ENCODE measurements at regions of chr5 and their contacts with region 1.

Region 1: GRCh38 chr5:98768160-98769005 is 5.1 kb upstream of the RGMB start:
- DNase-seq: no peak
- H3K4me3 ChIP-seq: peak overlapping the region; percentile 86
- CTCF ChIP-seq: peak; percentile 91

Region 2: DNA sequence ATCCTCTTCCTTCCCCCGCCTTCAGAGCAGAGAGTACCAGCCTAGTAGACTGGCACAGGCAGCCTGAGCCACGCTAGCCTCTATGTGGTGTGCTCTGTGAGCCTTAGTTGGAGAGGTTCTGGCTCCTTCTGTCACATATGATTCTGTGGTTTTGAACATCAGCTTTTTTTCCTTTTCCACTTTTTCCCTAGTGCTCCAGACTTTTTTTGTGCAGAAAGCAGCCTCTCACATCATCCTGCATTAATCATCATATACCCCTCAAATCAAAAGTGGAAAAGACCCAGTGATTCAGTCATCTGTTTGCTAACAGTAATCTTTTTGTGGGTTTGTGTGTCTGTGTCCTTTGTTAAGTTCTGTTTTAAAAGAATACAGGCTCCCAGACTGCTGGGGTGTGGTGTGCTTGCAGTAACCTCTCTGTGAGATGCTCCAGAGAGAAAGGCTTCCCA is 658.8 kb before region 1 on chr5:
- CTCF ChIA-PET with region 1: interaction called, 24 read pairs
- POLR2A ChIA-PET with region 1: interaction called, 21 read pairs
- DNase-seq: peak; percentile 49
- H3K4me3 ChIP-seq: peak overlapping the region; percentile 9
- CTCF ChIP-seq: no peak

Region 3: GRCh38 chr5:98354922-98355321 is 413.5 kb before region 1 on chr5:
- CTCF ChIA-PET with region 1: interaction called, 63 read pairs
- POLR2A ChIA-PET with region 1: interaction called, 4 read pairs
- DNase-seq: no peak
- H3K4me3 ChIP-seq: no peak overlapping the region
- CTCF ChIP-seq: no peak

Region 4: GRCh38 chr5:98397081-98397480 is 371.3 kb before region 1 on chr5:
- CTCF ChIA-PET with region 1: interaction called, 19 read pairs
- POLR2A ChIA-PET with region 1: interaction called, 5 read pairs
- DNase-seq: peak; percentile 85
- H3K4me3 ChIP-seq: no peak overlapping the region
- CTCF ChIP-seq: no peak

Region 5: DNA sequence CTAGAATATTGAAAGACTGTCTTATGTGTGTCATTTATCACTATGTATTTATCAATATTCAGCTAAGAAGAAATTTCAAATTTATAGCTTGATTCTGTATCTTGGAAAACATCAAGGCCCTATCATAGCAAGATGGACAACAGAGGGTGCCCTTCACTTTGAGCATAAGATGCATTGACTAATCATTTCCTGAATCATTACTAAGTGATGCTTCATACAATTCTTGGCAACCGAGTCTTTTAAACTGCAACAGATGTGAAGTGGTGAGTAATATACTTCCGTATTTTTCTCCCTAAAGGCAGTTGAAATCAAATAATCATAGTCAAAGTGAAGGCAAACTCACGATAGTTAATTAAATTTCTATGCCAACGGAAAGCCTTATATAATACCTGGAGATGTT is 313.5 kb before region 1 on chr5:
- CTCF ChIA-PET with region 1: interaction called, 68 read pairs
- POLR2A ChIA-PET with region 1: interaction called, 30 read pairs
- DNase-seq: peak; percentile 87
- H3K4me3 ChIP-seq: no peak overlapping the region; the same call in 1 of the 2 replicates
- CTCF ChIP-seq: peak; percentile 53

Region 6: GRCh38 chr5:98570010-98570409 is 198.4 kb before region 1 on chr5:
- CTCF ChIA-PET with region 1: interaction called, 11 read pairs
- POLR2A ChIA-PET with region 1: interaction called, 3 read pairs
- DNase-seq: no peak
- H3K4me3 ChIP-seq: no peak overlapping the region
- CTCF ChIP-seq: no peak

Region 7: DNA sequence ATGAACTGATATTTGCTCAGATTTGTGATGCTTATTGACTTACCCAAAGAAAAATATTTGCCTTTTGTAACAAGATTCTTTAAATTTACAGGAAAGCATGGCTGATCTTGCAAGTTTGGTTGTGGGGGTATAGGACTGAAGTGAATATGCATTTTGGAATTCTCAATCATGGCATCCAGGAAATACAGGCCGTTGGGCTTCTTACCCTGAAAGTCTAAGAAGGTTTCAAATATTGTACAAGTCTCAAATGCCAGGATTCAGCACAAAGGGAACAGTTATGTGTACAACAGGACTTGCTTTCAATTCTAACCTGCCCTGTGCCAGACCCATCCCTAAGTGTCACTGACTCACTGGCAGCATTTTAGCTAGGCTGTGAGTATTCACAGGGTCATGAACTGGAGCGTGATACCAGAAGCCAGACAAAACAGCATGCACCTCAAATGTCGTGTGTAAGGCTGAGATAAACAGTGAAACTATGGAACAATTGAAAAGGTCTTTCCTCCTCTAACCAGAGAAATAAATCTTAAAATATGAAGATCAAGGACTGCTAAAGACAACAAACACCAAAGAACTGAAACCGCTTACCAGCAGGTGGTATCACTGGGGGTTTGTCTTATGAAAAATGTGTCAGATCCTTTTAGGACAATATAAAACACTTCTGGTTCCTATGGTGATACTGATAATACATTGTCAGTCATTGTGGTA is 163.5 kb before region 1 on chr5:
- CTCF ChIA-PET with region 1: no interaction called
- POLR2A ChIA-PET with region 1: no interaction called
- DNase-seq: no peak
- H3K4me3 ChIP-seq: no peak overlapping the region
- CTCF ChIP-seq: no peak

Region 8: DNA sequence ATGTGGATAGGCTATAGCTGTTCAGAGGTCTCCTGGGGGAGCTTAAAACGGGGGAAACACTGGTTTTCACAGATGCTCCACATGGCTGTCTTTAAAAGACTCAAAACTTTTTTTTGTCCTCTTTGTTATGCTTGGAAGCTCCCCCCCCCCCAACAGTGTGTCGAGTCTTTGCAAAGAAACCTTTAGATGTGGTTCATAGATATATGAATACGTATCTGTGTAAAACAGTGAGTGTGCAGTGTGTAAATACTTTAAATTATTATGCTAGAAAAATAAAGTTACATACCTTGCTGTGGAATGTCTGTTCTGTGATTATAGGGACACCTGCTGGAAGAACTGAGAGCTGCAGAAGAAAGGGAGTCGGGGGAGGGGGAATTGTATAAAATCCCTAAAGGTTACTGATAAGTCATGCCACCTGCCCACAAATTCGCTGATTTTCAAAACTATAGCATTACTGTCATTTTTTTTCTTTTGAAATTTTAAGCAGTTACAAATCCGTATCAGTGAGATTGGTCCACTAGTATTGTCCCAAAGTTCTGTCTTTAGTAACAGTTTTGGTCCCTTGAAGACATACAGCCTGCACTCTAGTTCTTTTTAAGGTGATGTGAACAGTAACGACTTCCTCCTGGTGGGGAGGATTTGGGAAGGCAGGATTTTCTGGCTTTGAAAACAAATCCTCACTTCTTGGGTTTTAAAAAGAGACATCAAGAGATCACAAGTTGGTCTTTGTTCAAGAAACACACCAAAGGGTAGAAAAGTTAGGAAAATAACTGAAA is 28.0 kb after region 1 on chr5:
- CTCF ChIA-PET with region 1: interaction called, 40 read pairs
- POLR2A ChIA-PET with region 1: no interaction called
- DNase-seq: no peak
- H3K4me3 ChIP-seq: no peak overlapping the region
- CTCF ChIP-seq: peak; percentile 65

Measured in AG04449 (cell line).